Sigmoid colon (tissue), 7 donors: ENCODE measurements at regions of chr2 and their contacts with region 1.

Region 1: GRCh38 chr2:231514103-231514950 is 15.9 kb downstream of the NMUR1 start:
- DNase-seq: peak; percentile 99
- H3K4me3 ChIP-seq: peak overlapping the region; percentile 60 to 81 (median 73)
- H3K27ac ChIP-seq: peak overlapping the region; percentile 82 to 89 (median 87)
- H3K4me1 ChIP-seq: peaks cover 0 to 9% (median 2%) of the 10 kb centered on the region in 4 donors
- H3K27me3 ChIP-seq: no peaks in the 10 kb centered on the region
- CTCF ChIP-seq: no peak
- EP300 ChIP-seq: peak in 1 of 4 donors; percentile 23
- POLR2A ChIP-seq: peak; percentile 76 to 79

Region 2: GRCh38 chr2:231463698-231464575 is 50.4 kb before region 1 on chr2 and contains the start of gene NCL:
- intact Hi-C with region 1: loop called (anchors 1 kb)
- DNase-seq: peak; percentile 99
- H3K4me3 ChIP-seq: peak within 1 kb of the TSS; percentile 83 to 93 (median 90)
- H3K27ac ChIP-seq: peak within 1 kb of the TSS; percentile 94 to 99 (median 98)
- H3K4me1 ChIP-seq: peaks cover 0 to 43% (median 31%) of the 10 kb centered on the region in 4 donors
- H3K27me3 ChIP-seq: no peaks in the 10 kb centered on the region
- CTCF ChIP-seq: no peak
- EP300 ChIP-seq: no peak
- POLR2A ChIP-seq: peak; percentile 94 to 98
- total RNA-seq, gene NCL: 100 to 227 (median 126) TPM

Region 3: GRCh38 chr2:231557571-231558237 is 43.4 kb after region 1 on chr2:
- intact Hi-C with region 1: loop called (anchors 5 kb)
- DNase-seq: peak; percentile 89
- H3K4me3 ChIP-seq: no peak overlapping the region
- H3K27ac ChIP-seq: peak overlapping the region; percentile 38 to 65 (median 52)
- H3K4me1 ChIP-seq: peaks cover 0 to 20% (median 12%) of the 10 kb centered on the region in 4 donors
- H3K27me3 ChIP-seq: no peaks in the 10 kb centered on the region
- CTCF ChIP-seq: peak in 3 of 4 experiments; percentile 70 to 82 (median 72)
- EP300 ChIP-seq: no peak
- POLR2A ChIP-seq: no peak

Region 4: DNA sequence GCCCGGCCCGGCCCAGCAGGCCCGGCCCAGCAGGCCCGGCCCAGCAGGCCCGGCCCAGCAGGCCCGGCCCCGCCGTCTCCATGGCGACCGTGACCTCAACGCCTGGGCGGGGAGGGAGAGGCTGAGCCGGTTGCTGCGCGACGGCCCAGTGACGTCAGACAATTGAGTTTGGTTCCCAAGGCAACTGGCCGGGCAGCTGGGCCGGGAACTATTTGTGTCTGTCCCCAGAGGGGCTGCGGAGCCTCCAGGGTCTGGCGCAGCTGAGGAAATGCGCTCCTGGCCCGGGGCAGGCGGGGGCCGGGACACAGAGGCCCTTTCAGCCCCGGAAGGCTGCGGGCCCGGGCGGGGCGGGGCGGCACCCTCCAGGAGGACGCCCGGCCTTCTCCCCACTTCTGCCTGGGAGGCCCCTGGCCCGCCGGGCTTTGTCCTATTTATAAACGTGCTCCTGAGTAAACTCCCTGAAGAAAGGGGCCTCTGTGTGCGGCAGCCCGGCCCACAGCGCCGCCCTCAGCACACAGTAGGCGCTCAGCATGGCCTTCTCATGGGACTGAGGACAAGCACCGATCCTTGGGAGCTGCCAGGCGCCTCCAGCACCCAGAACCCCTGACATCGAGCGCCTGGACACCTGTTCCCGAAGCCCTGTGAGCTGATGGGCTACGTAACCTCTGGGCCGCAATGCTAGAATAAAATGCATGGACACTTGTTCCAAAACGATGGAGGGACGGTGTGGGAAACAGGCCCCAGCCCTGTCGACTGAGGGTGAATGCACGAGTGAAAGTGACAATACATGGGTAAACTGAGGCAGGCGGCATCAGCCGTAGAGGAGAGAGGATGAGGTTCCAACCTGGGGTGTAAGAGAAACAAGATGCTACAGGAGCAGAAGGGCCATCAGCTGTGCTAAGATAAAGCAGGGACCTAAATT is 90.6 kb after region 1 on chr2:
- intact Hi-C with region 1: loop called (anchors 2 kb)
- DNase-seq: peak; percentile 100
- H3K4me3 ChIP-seq: peak overlapping the region; percentile 51 to 62 (median 58)
- H3K27ac ChIP-seq: peak overlapping the region; percentile 98 to 100 (median 99)
- H3K4me1 ChIP-seq: peaks cover 2 to 68% (median 51%) of the 10 kb centered on the region in 4 donors
- H3K27me3 ChIP-seq: no peaks in the 10 kb centered on the region
- CTCF ChIP-seq: no peak
- EP300 ChIP-seq: peak; percentile 82 to 97 (median 90)
- POLR2A ChIP-seq: peak; percentile 48 to 61

Region 5: DNA sequence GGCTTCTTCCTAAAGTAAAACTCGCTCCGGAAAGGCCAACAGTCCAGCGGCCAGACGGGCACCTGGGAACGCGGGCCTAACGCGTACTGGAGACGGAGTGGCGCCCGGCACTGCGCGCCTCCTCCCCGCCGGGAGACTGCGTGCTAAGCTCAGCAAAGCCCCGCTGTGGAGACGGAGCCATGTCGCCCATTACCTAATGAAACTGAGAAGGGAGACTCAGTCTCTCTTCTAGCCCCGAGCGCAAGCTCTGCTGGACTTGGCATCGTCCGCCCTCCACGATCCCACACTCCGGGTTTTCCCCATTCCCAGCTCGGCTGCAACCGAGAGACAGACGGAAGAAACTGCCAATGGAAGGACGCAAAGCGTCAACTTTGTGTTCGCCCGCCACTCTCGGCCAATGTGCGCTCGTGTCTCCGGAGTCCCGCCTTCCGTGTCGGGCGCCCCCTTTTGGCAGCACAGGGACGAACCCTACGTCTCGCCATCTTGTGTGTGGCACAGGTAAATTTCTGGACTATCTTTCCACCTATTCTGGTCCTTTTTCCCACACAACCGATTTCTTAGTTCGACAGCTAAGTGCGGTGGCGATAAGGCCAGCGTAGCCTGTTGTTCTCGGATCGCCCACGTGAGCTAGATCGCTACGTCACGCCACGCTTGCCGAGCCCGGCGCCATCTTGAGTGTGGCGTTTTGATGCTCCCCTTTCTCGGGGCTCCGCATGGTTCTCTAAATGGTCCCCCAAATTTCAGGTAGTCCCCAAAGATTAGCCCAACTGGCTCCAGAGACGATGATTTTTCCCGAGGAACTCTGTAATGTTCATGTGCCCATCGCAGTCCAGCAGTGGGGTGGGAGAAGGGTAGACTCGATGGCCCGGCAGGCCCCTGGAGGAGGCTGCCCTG is 192.7 kb after region 1 on chr2:
- intact Hi-C with region 1: loop called (anchors 1 kb)
- DNase-seq: peak; percentile 100
- H3K4me3 ChIP-seq: peak overlapping the region; percentile 71 to 91 (median 86)
- H3K27ac ChIP-seq: peak overlapping the region; percentile 96 to 100 (median 99)
- H3K4me1 ChIP-seq: peaks cover 3 to 40% (median 32%) of the 10 kb centered on the region in 4 donors
- H3K27me3 ChIP-seq: no peaks in the 10 kb centered on the region
- CTCF ChIP-seq: peak; percentile 43 to 76 (median 68)
- EP300 ChIP-seq: no peak
- POLR2A ChIP-seq: peak; percentile 81 to 86